SK-N-SH (cell line): ENCODE measurements at regions of chr14 and their contacts with region 1.

Region 1: GRCh38 chr14:24160850-24161804 is at the start of gene IRF9:
- DNase-seq: peak; percentile 95
- H3K4me3 ChIP-seq: peak within 1 kb of the TSS; percentile 75 to 77
- H3K27ac ChIP-seq: peak within 1 kb of the TSS; percentile 67 to 96
- H3K4me1 ChIP-seq: peaks cover 4 to 22% of the 10 kb centered on the region in 2 experiments; a peak in 1 of 4 replicates
- H3K27me3 ChIP-seq: no peaks in the 10 kb centered on the region
- CTCF ChIP-seq: peak; percentile 95
- EP300 ChIP-seq: peak; percentile 18 to 62; a peak in 3 of 4 replicates
- RAD21 ChIP-seq: peak; percentile 76
- polyA plus RNA-seq, gene IRF9: 37.6 and 43.6 TPM in 2 replicates

Region 2: GRCh38 chr14:24108336-24108874 is 52.7 kb before region 1 on chr14:
- CTCF ChIA-PET with region 1: interaction called, 13 read pairs
- POLR2A ChIA-PET with region 1: interaction called, 11 read pairs
- DNase-seq: no peak
- H3K4me3 ChIP-seq: peak overlapping the region in 1 of 2 experiments; percentile 24; a peak in 1 of 4 replicates
- H3K27ac ChIP-seq: no peak overlapping the region
- H3K4me1 ChIP-seq: peaks cover 0 to 2% of the 10 kb centered on the region in 2 experiments; a peak in 1 of 4 replicates
- H3K27me3 ChIP-seq: no peaks in the 10 kb centered on the region
- CTCF ChIP-seq: no peak
- EP300 ChIP-seq: no peak
- RAD21 ChIP-seq: no peak

Region 3: GRCh38 chr14:24135834-24136542 is 25.1 kb before region 1 on chr14 and contains the start of gene PSME1:
- CTCF ChIA-PET with region 1: interaction called, 18 read pairs
- POLR2A ChIA-PET with region 1: interaction called, 4 read pairs
- DNase-seq: peak; percentile 98
- H3K4me3 ChIP-seq: peak within 1 kb of the TSS; percentile 82 to 91
- H3K27ac ChIP-seq: peak within 1 kb of the TSS; percentile 52 to 83
- H3K4me1 ChIP-seq: peaks cover 6 to 36% of the 10 kb centered on the region in 2 experiments; a peak in 2 of 4 replicates
- H3K27me3 ChIP-seq: no peaks in the 10 kb centered on the region
- CTCF ChIP-seq: no peak
- EP300 ChIP-seq: no peak
- RAD21 ChIP-seq: no peak; the same call in 1 of the 2 replicates
- polyA plus RNA-seq, gene PSME1: 154 and 287 TPM in 2 replicates

Region 4: GRCh38 chr14:24171422-24172260 is 10.5 kb after region 1 on chr14 and contains the start of gene REC8:
- CTCF ChIA-PET with region 1: interaction called, 23 read pairs
- POLR2A ChIA-PET with region 1: interaction called, 11 read pairs
- DNase-seq: peak; percentile 97
- H3K4me3 ChIP-seq: peak within 1 kb of the TSS; percentile 46 to 54; a peak in 3 of 4 replicates
- H3K27ac ChIP-seq: peak within 1 kb of the TSS in 1 of 2 experiments; percentile 90; a peak in 2 of 4 replicates
- H3K4me1 ChIP-seq: peaks cover 0 to 11% of the 10 kb centered on the region in 2 experiments; a peak in 1 of 4 replicates
- H3K27me3 ChIP-seq: no peaks in the 10 kb centered on the region
- CTCF ChIP-seq: no peak
- EP300 ChIP-seq: peak in 1 of 2 experiments; percentile 52; a peak in 1 of 4 replicates
- RAD21 ChIP-seq: no peak
- polyA plus RNA-seq, gene REC8: 13.1 and 23.2 TPM in 2 replicates

Region 5: GRCh38 chr14:24188251-24189058 is 27.3 kb after region 1 on chr14 and contains the start of gene IPO4:
- CTCF ChIA-PET with region 1: interaction called, 16 read pairs
- POLR2A ChIA-PET with region 1: interaction called, 6 read pairs
- DNase-seq: peak; percentile 97
- H3K4me3 ChIP-seq: peak within 1 kb of the TSS; percentile 88 to 96
- H3K27ac ChIP-seq: peak within 1 kb of the TSS; percentile 72 to 89
- H3K4me1 ChIP-seq: peaks cover 9 to 21% of the 10 kb centered on the region in 2 experiments
- H3K27me3 ChIP-seq: no peaks in the 10 kb centered on the region
- CTCF ChIP-seq: no peak
- EP300 ChIP-seq: peak; percentile 4 to 31; a peak in 1 of 4 replicates
- RAD21 ChIP-seq: no peak
- polyA plus RNA-seq, gene IPO4: 39.7 and 61.3 TPM in 2 replicates